ENCODE measurements at regions of chr18 and their contacts with region 1.

Region 1: GRCh38 chr18:8559612-8560186 is 49.5 kb upstream of the RAB12 start:
- DNase-seq: no peak
- ATAC-seq: no peak
- H3K4me3 ChIP-seq: no peak overlapping the region
- H3K4me3 Mint-ChIP-seq: no peak overlapping the region
- H3K27ac ChIP-seq: no peak overlapping the region
- H3K27ac Mint-ChIP-seq: no peak overlapping the region
- H3K4me1 ChIP-seq: no peaks in the 10 kb centered on the region
- H3K4me1 Mint-ChIP-seq: no peaks in the 10 kb centered on the region
- H3K27me3 ChIP-seq: peaks cover 0 to 2% of the 10 kb centered on the region in 2 experiments
- H3K27me3 Mint-ChIP-seq: no peaks in the 10 kb centered on the region
- CTCF ChIP-seq: no peak

Region 2: GRCh38 chr18:8478166-8478967 is 81.3 kb before region 1 on chr18:
- CTCF ChIA-PET with region 1: no interaction called
- POLR2A ChIA-PET with region 1: no interaction called
- intact Hi-C with region 1: no loop called
- DNase-seq: peak; percentile 11 to 60 (median 34)
- ATAC-seq: peak; percentile 43
- H3K4me3 ChIP-seq: no peak overlapping the region
- H3K4me3 Mint-ChIP-seq: no peak overlapping the region
- H3K27ac ChIP-seq: no peak overlapping the region
- H3K27ac Mint-ChIP-seq: no peak overlapping the region
- H3K4me1 ChIP-seq: no peaks in the 10 kb centered on the region
- H3K4me1 Mint-ChIP-seq: no peaks in the 10 kb centered on the region
- H3K27me3 ChIP-seq: peaks cover 0 to 3% of the 10 kb centered on the region in 2 experiments
- H3K27me3 Mint-ChIP-seq: peaks cover 16% of the 10 kb centered on the region
- CTCF ChIP-seq: peak; percentile 44

Region 3: GRCh38 chr18:8730080-8730827 is 170.6 kb after region 1 on chr18:
- CTCF ChIA-PET with region 1: no interaction called
- POLR2A ChIA-PET with region 1: no interaction called
- intact Hi-C with region 1: loop called in 1 of 2 experiments (anchors 5 kb)
- DNase-seq: no peak
- ATAC-seq: no peak
- H3K4me3 ChIP-seq: no peak overlapping the region
- H3K4me3 Mint-ChIP-seq: no peak overlapping the region
- H3K27ac ChIP-seq: no peak overlapping the region
- H3K27ac Mint-ChIP-seq: no peak overlapping the region
- H3K4me1 ChIP-seq: no peaks in the 10 kb centered on the region
- H3K4me1 Mint-ChIP-seq: no peaks in the 10 kb centered on the region
- H3K27me3 ChIP-seq: no peaks in the 10 kb centered on the region
- H3K27me3 Mint-ChIP-seq: peaks cover 12% of the 10 kb centered on the region
- CTCF ChIP-seq: no peak

Region 4: DNA sequence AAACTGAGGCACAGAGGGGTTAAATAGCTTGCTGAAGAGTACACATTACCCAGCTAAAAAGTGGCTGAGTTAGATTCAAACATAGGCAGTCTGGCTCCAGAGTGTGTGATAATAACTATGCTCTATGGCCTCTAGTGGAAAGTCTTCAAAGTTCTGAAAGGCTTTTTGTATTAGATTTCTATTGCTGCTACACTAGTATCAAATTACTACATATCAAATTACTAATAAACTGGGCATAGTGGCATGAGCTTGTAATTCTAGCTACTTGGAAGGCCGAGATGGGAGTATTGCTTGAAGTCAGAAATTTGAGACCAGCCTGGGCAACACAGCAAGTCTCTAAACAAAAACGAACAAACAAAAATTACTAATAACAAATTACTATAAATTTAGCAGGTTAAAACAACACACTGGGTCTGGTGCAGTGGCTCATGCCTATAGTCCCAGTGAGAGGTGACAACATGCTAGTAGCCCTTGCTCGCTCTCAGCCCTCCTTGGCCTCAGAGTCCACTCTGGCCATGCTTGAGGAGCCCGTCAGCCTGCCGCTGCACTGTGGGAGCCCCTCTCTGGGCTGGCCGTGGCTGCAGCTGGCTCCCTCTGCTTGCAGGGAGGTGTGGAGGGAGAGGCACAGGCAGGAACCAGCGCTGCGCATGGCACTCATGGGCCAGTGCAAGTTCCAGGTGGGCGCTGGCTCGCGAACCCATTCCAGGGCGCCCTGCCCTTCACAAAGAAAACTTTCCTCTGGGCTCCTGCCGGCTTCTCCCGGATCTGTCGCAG is 736.7 kb after region 1 on chr18:
- CTCF ChIA-PET with region 1: no interaction called
- POLR2A ChIA-PET with region 1: no interaction called
- intact Hi-C with region 1: no loop called
- DNase-seq: no peak
- ATAC-seq: no peak
- H3K4me3 ChIP-seq: no peak overlapping the region
- H3K4me3 Mint-ChIP-seq: no peak overlapping the region
- H3K27ac ChIP-seq: no peak overlapping the region
- H3K27ac Mint-ChIP-seq: no peak overlapping the region
- H3K4me1 ChIP-seq: no peaks in the 10 kb centered on the region
- H3K4me1 Mint-ChIP-seq: no peaks in the 10 kb centered on the region
- H3K27me3 ChIP-seq: no peaks in the 10 kb centered on the region
- H3K27me3 Mint-ChIP-seq: peaks cover 5% of the 10 kb centered on the region
- CTCF ChIP-seq: no peak